Cardiac septum (tissue), 1 donor: ENCODE measurements at regions of chr1 and their contacts with region 1.

Region 1: GRCh38 chr1:162612606-162613400 is 19.5 kb upstream of the DDR2 start:
- DNase-seq: no peak

Region 2: DNA sequence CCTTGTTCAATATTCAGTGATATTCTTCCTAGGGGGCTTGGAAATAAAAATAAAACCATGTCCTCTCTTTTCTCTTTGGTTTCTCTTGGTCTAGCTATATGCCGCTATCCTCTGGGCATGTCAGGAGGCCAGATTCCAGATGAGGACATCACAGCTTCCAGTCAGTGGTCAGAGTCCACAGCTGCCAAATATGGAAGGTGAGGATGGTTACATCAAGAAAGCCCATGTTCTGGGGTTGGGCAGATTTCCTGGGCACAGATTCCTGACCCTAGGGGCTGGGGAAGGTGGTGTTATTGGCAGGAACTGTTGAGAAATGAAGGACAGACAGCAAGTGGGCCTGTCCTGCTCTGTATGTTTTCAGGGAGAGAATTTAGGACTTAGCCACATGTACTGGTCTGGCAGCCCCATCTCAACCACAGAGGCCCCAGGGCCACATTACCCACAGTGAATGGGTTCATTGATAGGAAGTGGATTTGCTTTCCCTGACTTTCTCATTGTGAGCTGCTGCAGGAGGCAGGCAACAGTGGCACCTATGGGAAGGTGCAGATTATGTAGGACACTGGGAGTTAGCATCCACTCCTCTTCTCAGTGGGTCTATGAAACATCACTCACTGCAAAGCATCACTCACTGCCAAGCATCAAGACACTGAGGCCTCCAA is 140.3 kb after region 1 on chr1:
- intact Hi-C with region 1: loop called (anchors 5 kb)
- DNase-seq: no peak